ENCODE measurements at regions of chr14 and their contacts with region 1.

Region 1: DNA sequence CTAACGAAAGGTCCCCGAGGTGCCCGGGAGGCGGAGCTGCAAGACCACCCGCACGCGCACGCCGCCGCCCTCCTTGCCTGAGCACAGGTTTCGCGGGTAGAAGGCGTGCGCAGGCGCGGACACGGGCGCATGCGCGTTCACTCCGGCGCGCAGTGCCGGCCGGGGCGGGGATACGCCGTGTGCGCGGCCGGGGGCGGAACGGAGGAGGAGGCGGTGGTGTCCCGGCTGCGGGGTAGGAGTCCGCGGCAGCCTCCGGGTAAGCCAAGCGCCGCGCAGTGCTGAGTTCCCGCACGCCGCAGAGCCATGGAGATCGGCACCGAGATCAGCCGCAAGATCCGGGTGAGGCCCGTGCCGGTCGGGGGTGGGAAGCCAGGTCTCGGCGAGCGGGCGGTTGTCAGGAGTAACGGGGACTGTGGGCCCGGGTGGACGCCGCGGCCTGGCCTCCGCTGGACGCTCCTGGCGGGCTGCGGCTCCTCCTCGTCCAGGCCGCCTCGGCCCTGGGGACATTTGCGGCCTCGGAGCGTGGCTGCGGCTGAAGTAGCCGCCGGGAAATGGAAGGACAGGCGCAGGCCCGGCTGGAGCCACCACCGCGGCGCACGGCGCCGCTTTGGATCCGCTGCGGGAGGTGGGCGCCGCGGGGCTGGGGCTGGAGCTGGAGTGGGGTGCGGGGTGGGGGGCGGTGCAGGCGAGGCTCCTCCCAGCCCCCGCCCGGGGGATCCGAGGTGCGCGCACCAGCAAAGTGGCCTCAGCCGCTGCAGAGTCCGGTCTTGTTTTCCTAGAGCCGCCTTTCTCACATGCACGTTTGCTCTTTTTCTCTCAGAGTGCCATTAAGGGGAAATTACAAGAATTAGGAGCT is at the start of gene ZC3H14:
- DNase-seq: peak; percentile 86 to 94 (median 88)
- ATAC-seq: peak; percentile 95 to 99 (median 98)
- H3K4me3 ChIP-seq: peak within 1 kb of the TSS; percentile 60 to 99 (median 88)
- H3K27ac ChIP-seq: peak within 1 kb of the TSS; percentile 82 to 96 (median 92)
- H3K4me1 ChIP-seq: peaks cover 0 to 26% (median 18%) of the 10 kb centered on the region in 12 donors
- H3K27me3 ChIP-seq: peaks cover 0 to 2% (median 0%) of the 10 kb centered on the region in 9 donors
- CTCF ChIP-seq: peak in 2 of 12 donors; percentile 11 to 16
- POLR2A ChIP-seq: peak in 1 of 2 donors; percentile 82
- total RNA-seq, gene ZC3H14: 36.8 to 62.7 (median 44.7) TPM

Region 2: GRCh38 chr14:88492272-88493089 is 70.6 kb before region 1 on chr14:
- intact Hi-C with region 1: loop called in 8 of 10 experiments (anchors 2 to 5 kb)
- DNase-seq: peak in 3 of 5 donors; percentile 51 to 69 (median 59)
- ATAC-seq: peak; percentile 31 to 78 (median 74)
- H3K4me3 ChIP-seq: no peak overlapping the region
- H3K27ac ChIP-seq: peak overlapping the region in 10 of 12 donors; percentile 3 to 71 (median 51)
- H3K4me1 ChIP-seq: peaks cover 0 to 23% (median 8%) of the 10 kb centered on the region in 12 donors
- H3K27me3 ChIP-seq: no peaks in the 10 kb centered on the region
- CTCF ChIP-seq: peak; percentile 87 to 96 (median 93)
- POLR2A ChIP-seq: no peak

Region 3: GRCh38 chr14:88804035-88804434 is 241.0 kb after region 1 on chr14:
- intact Hi-C with region 1: no loop called
- DNase-seq: no peak
- ATAC-seq: no peak
- H3K4me3 ChIP-seq: no peak overlapping the region
- H3K27ac ChIP-seq: no peak overlapping the region
- H3K4me1 ChIP-seq: no peaks in the 10 kb centered on the region
- H3K27me3 ChIP-seq: peaks cover 0 to 6% (median 0%) of the 10 kb centered on the region in 9 donors
- CTCF ChIP-seq: no peak
- POLR2A ChIP-seq: no peak

Measured in heart left ventricle (tissue), 16 donors.